Activated CD4-positive, alpha-beta T cell treated with anti-CD3 and anti-CD28 coated beads, Interleukin-2, amount 10 ng/mL, durations not matched to agents 24 days and 14 days (primary cell): ENCODE measurements at regions of chr10 and their contacts with region 1.

Region 1: GRCh38 chr10:32346134-32346550 is 816 bp downstream of the EPC1 start:
- DNase-seq: peak; percentile 98
- H3K4me3 Mint-ChIP-seq: peak overlapping the region; percentile 90
- H3K27ac Mint-ChIP-seq: peak overlapping the region; percentile 99
- H3K4me1 Mint-ChIP-seq: peaks cover 42% of the 10 kb centered on the region
- H3K27me3 Mint-ChIP-seq: peaks cover 4% of the 10 kb centered on the region

Region 2: GRCh38 chr10:31928549-31929260 is 417.4 kb before region 1 on chr10 and contains the start of gene ARHGAP12:
- intact Hi-C with region 1: loop called (anchors 10 kb)
- DNase-seq: peak; percentile 94
- H3K4me3 Mint-ChIP-seq: peak within 1 kb of the TSS; percentile 89
- H3K27ac Mint-ChIP-seq: peak within 1 kb of the TSS; percentile 73
- H3K4me1 Mint-ChIP-seq: peaks cover 36% of the 10 kb centered on the region
- H3K27me3 Mint-ChIP-seq: peaks cover 6% of the 10 kb centered on the region
- total RNA-seq, gene ARHGAP12: 3.6 and 3.7 TPM in 2 replicates

Region 3: GRCh38 chr10:32190890-32191491 is 155.2 kb before region 1 on chr10:
- intact Hi-C with region 1: loop called (anchors 1 kb)
- DNase-seq: peak; percentile 65
- H3K4me3 Mint-ChIP-seq: no peak overlapping the region
- H3K27ac Mint-ChIP-seq: peak overlapping the region; percentile 32
- H3K4me1 Mint-ChIP-seq: peaks cover 4% of the 10 kb centered on the region
- H3K27me3 Mint-ChIP-seq: peaks cover 5% of the 10 kb centered on the region

Region 4: GRCh38 chr10:32298054-32298812 is 47.9 kb before region 1 on chr10:
- intact Hi-C with region 1: loop called (anchors 5 kb)
- DNase-seq: no peak
- H3K4me3 Mint-ChIP-seq: peak overlapping the region; percentile 45
- H3K27ac Mint-ChIP-seq: peak overlapping the region; percentile 71
- H3K4me1 Mint-ChIP-seq: peaks cover 20% of the 10 kb centered on the region
- H3K27me3 Mint-ChIP-seq: no peaks in the 10 kb centered on the region

Region 5: DNA sequence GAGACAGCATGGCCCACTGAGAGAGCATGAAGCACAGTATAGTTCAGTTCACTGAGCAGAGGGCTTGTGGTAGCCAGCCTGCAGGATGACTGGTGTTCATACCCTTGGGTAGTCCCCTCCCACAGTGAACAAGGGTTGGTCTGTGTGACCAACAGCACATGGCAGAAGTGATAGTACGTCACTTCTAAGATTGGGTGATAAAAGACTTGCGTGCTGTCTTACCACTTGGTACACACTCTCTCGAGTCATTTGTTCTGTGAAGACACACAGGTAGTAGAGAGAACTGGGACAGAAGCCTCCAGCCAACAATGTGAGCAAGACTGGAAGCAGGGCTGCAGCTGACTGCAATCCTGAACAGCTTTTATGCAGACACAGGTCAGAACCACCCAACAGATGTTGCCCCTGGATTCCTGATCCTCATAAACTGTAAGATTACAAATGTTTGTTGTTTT is 13.8 kb before region 1 on chr10:
- intact Hi-C with region 1: loop called (anchors 1 kb)
- DNase-seq: peak; percentile 91
- H3K4me3 Mint-ChIP-seq: peak overlapping the region; percentile 75
- H3K27ac Mint-ChIP-seq: peak overlapping the region; percentile 91
- H3K4me1 Mint-ChIP-seq: peaks cover 76% of the 10 kb centered on the region
- H3K27me3 Mint-ChIP-seq: no peaks in the 10 kb centered on the region

Region 6: GRCh38 chr10:32378363-32379317 is 32.5 kb after region 1 on chr10:
- intact Hi-C with region 1: loop called (anchors 1 kb)
- DNase-seq: peak; percentile 97
- H3K4me3 Mint-ChIP-seq: no peak overlapping the region
- H3K27ac Mint-ChIP-seq: no peak overlapping the region
- H3K4me1 Mint-ChIP-seq: peaks cover 18% of the 10 kb centered on the region
- H3K27me3 Mint-ChIP-seq: no peaks in the 10 kb centered on the region